ENCODE measurements at regions of chr5 and their contacts with region 1.

Region 1: GRCh38 chr5:53425598-53426511 is 54.6 kb upstream of the FST start:
- DNase-seq: no peak
- ATAC-seq: no peak
- H3K4me3 ChIP-seq: no peak overlapping the region
- H3K27ac ChIP-seq: no peak overlapping the region
- H3K4me1 ChIP-seq: no peaks in the 10 kb centered on the region
- H3K27me3 ChIP-seq: no peaks in the 10 kb centered on the region
- CTCF ChIP-seq: peak in 1 of 5 experiments; percentile 24
- POLR2A ChIP-seq: no peak

Region 2: GRCh38 chr5:53262348-53262970 is 163.4 kb before region 1 on chr5:
- in situ Hi-C with region 1: no loop called
- intact Hi-C with region 1: loop called (anchors 10 kb)
- DNase-seq: no peak
- ATAC-seq: no peak
- H3K4me3 ChIP-seq: no peak overlapping the region
- H3K27ac ChIP-seq: no peak overlapping the region
- H3K4me1 ChIP-seq: no peaks in the 10 kb centered on the region
- H3K27me3 ChIP-seq: no peaks in the 10 kb centered on the region
- CTCF ChIP-seq: no peak
- POLR2A ChIP-seq: no peak